GM12878 (cell line): ENCODE measurements at regions of chr2 and their contacts with region 1.

Region 1: DNA sequence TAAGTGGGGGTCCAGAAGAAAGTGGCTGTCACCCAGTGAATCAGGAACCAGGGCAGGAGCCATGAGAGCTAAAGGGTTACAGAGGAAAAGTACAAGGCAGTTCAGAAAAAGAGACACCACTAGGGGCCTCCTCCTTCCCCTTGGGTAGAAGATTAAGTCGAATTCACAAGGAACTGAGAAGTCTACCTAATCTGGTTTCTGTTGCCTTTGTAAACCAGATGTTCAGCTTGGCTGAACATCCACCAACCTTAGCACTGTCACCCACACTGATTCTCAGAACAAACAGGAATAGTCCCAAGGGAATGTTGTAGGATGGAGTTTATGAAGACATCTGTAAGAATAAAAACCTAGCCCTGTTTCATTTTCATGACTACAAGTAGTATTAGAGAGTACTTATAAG is 90.4 kb upstream of the NOSTRIN start:
- DNase-seq: peak; percentile 91
- ATAC-seq: peak; percentile 97
- H3K4me3 ChIP-seq: no peak overlapping the region
- H3K27ac ChIP-seq: peak overlapping the region; percentile 62
- H3K4me1 ChIP-seq: peaks cover 16% of the 10 kb centered on the region
- H3K27me3 ChIP-seq: no peaks in the 10 kb centered on the region
- CTCF ChIP-seq: peak; percentile 38 to 52 (median 51); a peak in 5 of 6 replicates
- EP300 ChIP-seq: peak; percentile 62 to 78; a peak in 3 of 4 replicates
- POLR2A ChIP-seq: no peak
- RAD21 ChIP-seq: peak; percentile 47; the same call in 1 of the 2 replicates

Region 2: DNA sequence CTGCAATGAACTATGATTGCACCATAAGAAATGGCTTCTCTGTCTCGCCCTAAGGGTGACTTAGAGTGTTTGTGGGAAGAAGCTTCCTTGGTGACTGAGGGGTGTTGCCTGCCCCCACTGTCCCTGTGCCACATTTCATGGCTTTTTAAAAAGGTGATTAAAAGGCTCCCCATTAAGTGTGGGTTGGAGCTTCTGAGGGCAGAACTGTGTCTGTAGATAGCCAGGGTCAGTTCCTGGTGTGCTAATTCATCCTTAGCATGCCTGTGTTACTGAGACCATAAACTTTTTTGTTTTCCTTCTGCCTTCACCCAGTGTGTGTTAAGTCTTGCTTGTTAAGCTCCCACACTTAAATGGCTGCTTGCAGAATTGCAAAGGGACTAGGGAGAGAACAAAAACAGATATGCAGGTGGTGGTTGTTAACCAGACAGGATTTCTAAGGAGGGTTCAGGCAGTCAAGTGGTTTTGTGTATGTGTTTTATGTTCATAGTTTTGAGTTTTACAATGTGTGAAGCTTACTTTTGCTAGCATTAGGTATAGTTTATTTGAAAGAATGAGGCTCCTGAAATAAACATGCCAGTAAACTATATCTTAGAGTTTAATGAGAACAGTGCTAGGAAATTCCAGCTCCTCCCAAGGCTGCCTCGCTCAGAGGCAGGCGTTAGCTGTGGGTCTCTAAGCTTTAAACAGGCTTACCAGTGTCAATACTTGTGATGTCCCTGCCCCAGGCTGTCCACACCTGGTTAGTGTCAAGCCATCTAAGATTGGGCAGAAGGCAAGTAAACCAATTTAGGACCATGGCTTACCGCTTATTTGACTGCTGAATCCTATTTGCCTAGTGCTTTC is 241.5 kb before region 1 on chr2:
- CTCF ChIA-PET with region 1: no interaction called
- POLR2A ChIA-PET with region 1: no interaction called
- RAD21 ChIA-PET with region 1: no interaction called
- SMC1A ChIA-PET with region 1: no interaction called
- in situ Hi-C with region 1: no loop called
- intact Hi-C with region 1: loop called (anchors 5 kb)
- DNase-seq: no peak
- ATAC-seq: peak; percentile 47
- H3K4me3 ChIP-seq: peak overlapping the region; percentile 8; the same call in 1 of the 2 replicates
- H3K27ac ChIP-seq: peak overlapping the region; percentile 71
- H3K4me1 ChIP-seq: peaks cover 52% of the 10 kb centered on the region
- H3K27me3 ChIP-seq: no peaks in the 10 kb centered on the region
- CTCF ChIP-seq: no peak
- EP300 ChIP-seq: no peak
- POLR2A ChIP-seq: no peak
- RAD21 ChIP-seq: no peak

Region 3: GRCh38 chr2:168751104-168751740 is 39.2 kb after region 1 on chr2:
- CTCF ChIA-PET with region 1: interaction called, 3 read pairs
- POLR2A ChIA-PET with region 1: no interaction called
- RAD21 ChIA-PET with region 1: no interaction called
- SMC1A ChIA-PET with region 1: interaction called, 4 read pairs
- in situ Hi-C with region 1: no loop called
- intact Hi-C with region 1: loop called (anchors 2 kb)
- DNase-seq: no peak
- ATAC-seq: peak; percentile 93
- H3K4me3 ChIP-seq: no peak overlapping the region
- H3K27ac ChIP-seq: 0 out of 2 replicates have a peak overlapping the region, but pooled peaks have one; percentile 11
- H3K4me1 ChIP-seq: peaks cover 6% of the 10 kb centered on the region
- H3K27me3 ChIP-seq: no peaks in the 10 kb centered on the region
- CTCF ChIP-seq: no peak
- EP300 ChIP-seq: no peak
- POLR2A ChIP-seq: no peak
- RAD21 ChIP-seq: no peak

Region 4: DNA sequence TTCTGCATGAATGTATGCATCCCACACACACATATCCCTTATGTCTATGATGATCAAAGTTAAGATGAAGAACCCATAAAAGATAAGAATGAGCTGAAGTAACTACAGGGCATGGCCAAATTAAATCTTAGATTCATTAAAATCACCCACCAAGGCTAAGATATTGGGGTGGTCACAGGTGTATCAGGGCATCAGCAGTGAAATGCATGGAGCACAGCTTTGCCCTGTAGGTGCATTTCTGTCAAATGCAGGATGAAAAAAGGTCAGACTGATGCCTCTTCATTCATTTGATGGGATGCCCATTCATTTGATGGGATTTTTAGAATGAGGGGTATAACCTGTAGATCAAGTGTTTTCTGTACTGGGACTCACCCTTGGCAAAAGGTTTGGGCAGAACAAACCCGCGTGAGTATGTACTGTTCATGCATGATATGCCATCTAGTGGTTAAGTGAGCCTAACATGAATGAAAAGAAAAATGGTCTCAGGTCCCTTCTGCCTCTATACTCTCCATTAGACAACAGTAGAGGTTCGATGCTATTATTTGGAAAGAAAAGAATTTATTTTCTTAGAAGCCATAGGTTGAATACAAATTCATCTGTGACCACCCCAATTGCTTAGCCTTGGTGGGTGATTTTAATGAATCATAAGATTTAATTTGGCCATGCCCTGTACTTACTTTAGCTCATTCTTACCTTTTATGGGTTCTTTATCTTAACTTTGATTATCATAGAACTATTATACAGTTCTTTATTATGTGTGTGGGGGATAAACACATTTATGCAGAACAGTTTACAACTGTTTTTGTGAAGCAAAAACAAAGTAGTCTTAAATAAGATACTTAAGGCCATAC is 47.1 kb after region 1 on chr2:
- CTCF ChIA-PET with region 1: interaction called, 10 read pairs
- POLR2A ChIA-PET with region 1: no interaction called
- RAD21 ChIA-PET with region 1: interaction called, 3 read pairs
- SMC1A ChIA-PET with region 1: interaction called, 5 read pairs
- in situ Hi-C with region 1: no loop called
- intact Hi-C with region 1: loop called (anchors 2 kb)
- DNase-seq: peak; percentile 16
- ATAC-seq: peak; percentile 96
- H3K4me3 ChIP-seq: no peak overlapping the region
- H3K27ac ChIP-seq: no peak overlapping the region
- H3K4me1 ChIP-seq: peaks cover 5% of the 10 kb centered on the region; the same call in 1 of the 2 replicates
- H3K27me3 ChIP-seq: no peaks in the 10 kb centered on the region
- CTCF ChIP-seq: peak; percentile 52 to 68 (median 55); a peak in 5 of 6 replicates
- EP300 ChIP-seq: no peak
- POLR2A ChIP-seq: no peak
- RAD21 ChIP-seq: peak; percentile 83